A673 (cell line): ENCODE measurements at regions of chr3 and their contacts with region 1.

Region 1: GRCh38 chr3:161851941-161852566 is 355.4 kb downstream of the OTOL1 start:
- DNase-seq: peak; percentile 70
- H3K4me3 ChIP-seq: no peak overlapping the region
- H3K27ac ChIP-seq: no peak overlapping the region
- H3K4me1 ChIP-seq: peaks cover 8% of the 10 kb centered on the region
- H3K27me3 ChIP-seq: no peaks in the 10 kb centered on the region
- CTCF ChIP-seq: peak; percentile 84

Region 2: DNA sequence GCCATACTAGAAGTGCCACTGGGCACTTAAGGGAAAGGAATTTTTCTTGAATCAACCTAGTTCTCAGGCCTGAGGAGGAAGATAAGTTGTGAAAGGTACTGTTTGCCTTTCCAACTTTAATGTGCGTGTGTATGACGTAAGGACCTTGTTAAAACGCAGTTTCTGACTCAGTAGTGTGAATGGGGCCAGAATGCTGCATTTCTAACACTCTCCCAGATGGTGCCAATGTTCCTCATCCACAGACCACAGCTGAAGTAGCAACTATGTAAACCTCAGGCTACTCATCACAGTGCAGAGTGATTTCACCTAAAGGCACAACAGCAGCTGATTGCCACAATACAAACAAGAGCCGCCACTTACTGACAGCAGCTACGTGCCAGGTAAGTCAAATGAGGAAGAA is 251.9 kb before region 1 on chr3:
- CTCF ChIA-PET with region 1: no interaction called
- POLR2A ChIA-PET with region 1: no interaction called
- intact Hi-C with region 1: no loop called
- DNase-seq: no peak
- H3K4me3 ChIP-seq: no peak overlapping the region
- H3K27ac ChIP-seq: no peak overlapping the region
- H3K4me1 ChIP-seq: no peaks in the 10 kb centered on the region
- H3K27me3 ChIP-seq: no peaks in the 10 kb centered on the region
- CTCF ChIP-seq: no peak

Region 3: GRCh38 chr3:162082516-162082915 is 230.5 kb after region 1 on chr3:
- CTCF ChIA-PET with region 1: no interaction called
- POLR2A ChIA-PET with region 1: no interaction called
- intact Hi-C with region 1: loop called (anchors 10 kb)
- DNase-seq: no peak
- H3K4me3 ChIP-seq: no peak overlapping the region
- H3K27ac ChIP-seq: no peak overlapping the region
- H3K4me1 ChIP-seq: peaks cover 3% of the 10 kb centered on the region
- H3K27me3 ChIP-seq: no peaks in the 10 kb centered on the region
- CTCF ChIP-seq: no peak

Region 4: GRCh38 chr3:162517110-162517509 is 665.1 kb after region 1 on chr3:
- CTCF ChIA-PET with region 1: no interaction called
- POLR2A ChIA-PET with region 1: no interaction called
- intact Hi-C with region 1: loop called (anchors 10 kb)
- DNase-seq: peak; percentile 11
- H3K4me3 ChIP-seq: no peak overlapping the region
- H3K27ac ChIP-seq: no peak overlapping the region
- H3K4me1 ChIP-seq: no peaks in the 10 kb centered on the region
- H3K27me3 ChIP-seq: no peaks in the 10 kb centered on the region
- CTCF ChIP-seq: no peak; the same call in 1 of the 2 replicates

Region 5: GRCh38 chr3:163071697-163072096 is 1219.6 kb after region 1 on chr3:
- CTCF ChIA-PET with region 1: no interaction called
- POLR2A ChIA-PET with region 1: no interaction called
- intact Hi-C with region 1: loop called (anchors 10 kb)
- DNase-seq: peak; percentile 44
- H3K4me3 ChIP-seq: no peak overlapping the region
- H3K27ac ChIP-seq: no peak overlapping the region
- H3K4me1 ChIP-seq: no peaks in the 10 kb centered on the region
- H3K27me3 ChIP-seq: no peaks in the 10 kb centered on the region
- CTCF ChIP-seq: no peak

Region 6: DNA sequence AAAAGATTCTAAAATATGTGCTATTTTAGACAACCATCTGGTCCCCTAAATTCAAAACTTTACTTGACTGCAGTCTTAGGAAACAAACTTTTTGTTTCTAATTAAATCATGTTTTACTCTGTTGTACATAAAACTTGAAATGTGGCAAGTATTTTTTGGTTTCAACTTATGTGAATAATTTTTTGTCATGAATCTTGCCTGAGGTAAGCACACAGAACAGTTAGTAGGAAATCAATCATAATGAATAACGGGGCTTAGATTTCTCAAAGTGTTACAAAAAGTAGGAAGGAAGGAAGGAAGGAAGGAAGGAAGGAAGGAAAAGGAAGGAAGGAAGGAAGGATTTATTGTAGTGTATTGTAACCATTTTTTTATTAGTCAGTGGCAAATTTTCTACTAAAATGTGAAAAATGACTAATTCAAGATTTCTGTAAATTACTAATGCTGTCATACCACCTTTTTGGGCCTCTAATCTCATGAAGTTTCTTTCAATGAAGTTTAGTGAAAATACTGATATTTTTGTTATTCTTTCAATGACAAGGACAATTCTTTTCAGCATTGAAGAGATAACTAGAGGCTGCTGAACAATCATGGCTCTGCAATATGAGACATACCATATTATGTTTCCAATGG is 1333.8 kb after region 1 on chr3:
- CTCF ChIA-PET with region 1: no interaction called
- POLR2A ChIA-PET with region 1: no interaction called
- intact Hi-C with region 1: loop called (anchors 5 kb)
- DNase-seq: peak; percentile 92
- H3K4me3 ChIP-seq: no peak overlapping the region
- H3K27ac ChIP-seq: peak overlapping the region; percentile 99
- H3K4me1 ChIP-seq: peaks cover 22% of the 10 kb centered on the region
- H3K27me3 ChIP-seq: no peaks in the 10 kb centered on the region
- CTCF ChIP-seq: no peak

Region 7: GRCh38 chr3:163462446-163462845 is 1610.4 kb after region 1 on chr3:
- CTCF ChIA-PET with region 1: no interaction called
- POLR2A ChIA-PET with region 1: no interaction called
- intact Hi-C with region 1: loop called (anchors 10 kb)
- DNase-seq: no peak
- H3K4me3 ChIP-seq: no peak overlapping the region
- H3K27ac ChIP-seq: peak overlapping the region; percentile 50
- H3K4me1 ChIP-seq: no peaks in the 10 kb centered on the region
- H3K27me3 ChIP-seq: no peaks in the 10 kb centered on the region
- CTCF ChIP-seq: no peak